Gastrocnemius medialis (tissue), 4 donors: ENCODE measurements at regions of chr2 and their contacts with region 1.

Region 1: DNA sequence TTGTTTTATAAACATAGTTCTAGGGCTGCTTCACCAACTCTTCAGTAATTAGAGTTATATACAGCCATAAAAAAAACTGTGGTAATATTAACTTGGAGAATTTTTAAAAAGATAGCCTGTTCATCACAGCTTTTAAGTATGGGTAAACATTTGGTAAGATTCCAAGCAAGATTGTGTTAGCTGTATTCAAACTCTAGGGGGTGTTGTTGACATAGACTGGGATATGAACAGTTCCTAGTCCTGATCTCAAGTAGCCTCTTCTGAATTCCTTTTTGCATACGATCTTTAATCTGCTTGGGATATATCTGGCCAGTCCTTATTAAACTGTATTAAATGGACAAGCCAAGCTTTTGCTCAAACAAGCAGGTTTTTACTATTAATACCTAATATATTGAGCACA is 13.4 kb downstream of the NOP58 start:
- DNase-seq: no peak
- ATAC-seq: peak; percentile 66 to 79
- H3K4me3 ChIP-seq: no peak overlapping the region
- H3K27ac ChIP-seq: peak overlapping the region; percentile 80 to 94 (median 84)
- H3K4me1 ChIP-seq: peaks cover 20 to 47% of the 10 kb centered on the region in 2 donors
- H3K27me3 ChIP-seq: no peaks in the 10 kb centered on the region
- CTCF ChIP-seq: peak in 4 of 5 experiments; percentile 28 to 62 (median 34)
- POLR2A ChIP-seq: no peak

Region 2: GRCh38 chr2:202221873-202222272 is 57.1 kb before region 1 on chr2:
- in situ Hi-C with region 1: no loop called
- intact Hi-C with region 1: no loop called
- DNase-seq: no peak
- ATAC-seq: no peak
- H3K4me3 ChIP-seq: no peak overlapping the region
- H3K27ac ChIP-seq: peak overlapping the region in 2 of 4 donors; percentile 24 to 33
- H3K4me1 ChIP-seq: peaks cover 29 to 31% of the 10 kb centered on the region in 2 donors
- H3K27me3 ChIP-seq: no peaks in the 10 kb centered on the region
- CTCF ChIP-seq: no peak
- POLR2A ChIP-seq: no peak

Region 3: DNA sequence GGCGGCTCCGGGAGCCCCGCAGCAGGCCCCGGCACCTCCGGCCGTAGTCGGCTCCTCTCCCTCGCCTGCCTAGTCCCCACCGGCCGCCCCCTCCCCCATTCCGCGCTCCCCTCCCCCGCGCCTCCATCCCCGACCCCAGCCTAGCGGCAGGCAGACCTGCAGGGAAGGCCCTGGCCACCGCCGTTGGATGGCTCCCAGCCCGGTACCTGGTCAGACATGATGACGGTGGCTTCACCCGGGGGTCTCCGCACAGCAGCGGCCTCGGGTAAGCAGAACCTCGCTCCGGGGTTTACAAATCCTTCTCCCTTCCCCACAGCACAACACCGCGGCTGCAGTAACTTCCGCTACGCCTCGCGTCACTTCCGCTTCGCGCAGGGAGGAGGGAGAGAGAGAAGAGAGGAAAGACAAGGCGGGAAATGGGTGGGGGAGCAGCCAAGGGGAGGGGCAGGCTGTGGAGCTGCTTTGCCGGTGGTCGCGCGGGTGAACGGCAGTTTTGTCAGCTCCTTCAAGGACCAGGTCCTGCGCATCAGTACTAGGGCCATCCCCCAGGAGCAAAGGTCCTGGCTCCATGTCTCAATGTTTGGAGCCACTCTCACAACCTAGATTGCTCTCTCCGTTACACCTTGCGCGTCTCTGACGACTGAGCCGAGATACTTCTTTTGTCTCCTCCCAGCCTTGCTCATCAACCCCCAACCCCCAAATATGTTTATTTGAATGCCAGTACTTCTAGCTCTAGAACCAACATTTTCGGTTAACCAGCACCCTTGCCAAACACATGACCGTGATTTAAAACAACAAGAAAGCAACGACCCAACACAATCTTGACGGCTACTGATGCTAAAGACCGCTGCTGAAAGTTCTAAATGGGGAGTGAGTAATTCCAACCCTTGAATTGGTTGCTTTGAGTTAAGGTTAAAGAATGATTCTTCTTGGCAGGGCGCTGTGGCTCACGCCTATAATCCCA is 40.4 kb before region 1 on chr2 and contains the start of gene SUMO1:
- in situ Hi-C with region 1: no loop called
- intact Hi-C with region 1: loop called (anchors 5 kb)
- DNase-seq: peak; percentile 77 to 86
- ATAC-seq: peak; percentile 96 to 97
- H3K4me3 ChIP-seq: peak within 1 kb of the TSS; percentile 92 to 100 (median 96)
- H3K27ac ChIP-seq: peak within 1 kb of the TSS; percentile 91 to 100 (median 99)
- H3K4me1 ChIP-seq: peaks cover 23 to 28% of the 10 kb centered on the region in 2 donors
- H3K27me3 ChIP-seq: no peaks in the 10 kb centered on the region
- CTCF ChIP-seq: no peak
- POLR2A ChIP-seq: peak; percentile 70 to 75
- total RNA-seq, gene SUMO1: 44.0 to 62.4 (median 52.7) TPM